ENCODE measurements at regions of chr4 and their contacts with region 1.

Region 1: DNA sequence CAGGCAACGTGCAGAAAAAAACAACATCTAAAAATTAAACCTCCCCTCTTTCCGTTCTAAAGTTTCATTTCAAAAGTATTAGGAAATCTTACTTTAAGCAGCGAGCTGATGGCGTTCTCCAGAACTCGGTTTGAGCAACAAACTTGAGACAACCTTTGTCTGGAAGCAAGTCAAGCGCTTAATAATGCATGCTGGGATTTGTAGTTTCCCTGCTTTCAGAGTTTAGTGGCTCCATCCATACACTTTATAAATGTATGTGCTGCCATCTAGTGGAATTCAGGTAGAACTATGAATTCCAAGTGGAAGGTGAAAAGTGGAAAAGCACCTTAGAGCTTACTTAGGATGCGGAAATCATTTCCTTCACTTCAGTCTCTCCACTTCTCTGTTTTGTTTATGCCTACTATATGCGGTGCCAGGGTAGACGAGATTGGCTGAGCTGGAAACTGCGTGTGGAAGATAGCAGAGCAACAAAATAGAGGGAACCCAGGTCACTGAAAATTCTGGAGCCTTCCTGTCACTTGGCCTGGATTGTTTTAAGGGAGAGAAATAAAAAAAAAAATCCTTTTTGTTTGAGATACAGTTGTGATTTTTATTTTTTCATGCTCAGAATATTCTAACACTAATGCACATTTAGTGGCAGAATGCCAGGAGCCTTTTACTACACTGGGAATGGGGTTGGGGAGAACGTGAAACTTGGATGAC is at the start of gene BDH2:
- DNase-seq: peak; percentile 54 to 66
- ATAC-seq: peak; percentile 100
- H3K4me3 ChIP-seq: peak within 1 kb of the TSS; percentile 55 to 62 (median 58)
- H3K27ac ChIP-seq: peak within 1 kb of the TSS; percentile 66 to 77 (median 73)
- H3K4me1 ChIP-seq: peaks cover 14 to 19% of the 10 kb centered on the region in 2 donors
- H3K27me3 ChIP-seq: no peaks in the 10 kb centered on the region
- CTCF ChIP-seq: peak; percentile 75 to 82 (median 79)
- POLR2A ChIP-seq: peak in 1 of 2 donors; percentile 28
- total RNA-seq, gene BDH2: 11.6 to 40.3 (median 18.5) TPM

Region 2: DNA sequence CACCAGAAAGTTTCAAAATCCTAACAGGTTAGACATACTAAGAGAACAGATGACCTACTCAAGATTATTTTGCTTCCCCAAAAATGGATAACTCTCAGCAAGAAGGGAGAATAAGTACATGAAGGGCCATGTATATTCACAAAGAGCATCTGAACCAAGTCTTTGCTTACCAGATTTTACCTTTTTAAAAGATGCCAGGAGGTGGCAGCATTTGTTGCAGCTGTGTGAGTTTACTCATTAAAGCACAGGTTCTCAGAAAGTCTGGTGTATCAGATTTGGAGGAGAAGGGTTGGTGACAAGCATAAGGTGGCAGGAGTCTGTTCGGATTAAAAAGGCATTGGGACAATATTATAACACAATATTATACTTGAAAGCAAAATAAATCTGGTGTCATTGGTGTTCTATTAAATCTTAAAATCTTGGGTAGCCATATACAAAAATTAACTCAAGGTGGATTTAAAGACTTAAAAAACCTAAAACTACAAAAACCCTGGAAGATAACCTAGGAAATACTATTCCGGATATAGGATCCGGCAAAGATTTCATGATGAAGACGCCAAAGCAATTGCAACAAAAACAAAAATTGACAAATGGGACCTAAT is 650.0 kb before region 1 on chr4:
- in situ Hi-C with region 1: loop called in 1 of 4 experiments (anchors 10 kb)
- intact Hi-C with region 1: loop called (anchors 5 kb)
- DNase-seq: no peak
- ATAC-seq: peak; percentile 68 to 75
- H3K4me3 ChIP-seq: no peak overlapping the region
- H3K27ac ChIP-seq: no peak overlapping the region
- H3K4me1 ChIP-seq: no peaks in the 10 kb centered on the region
- H3K27me3 ChIP-seq: no peaks in the 10 kb centered on the region
- CTCF ChIP-seq: peak; percentile 27 to 68 (median 42)
- POLR2A ChIP-seq: no peak

Region 3: GRCh38 chr4:102620697-102621497 is 478.9 kb before region 1 on chr4:
- in situ Hi-C with region 1: loop called (anchors 10 kb)
- intact Hi-C with region 1: loop called (anchors 1 kb)
- DNase-seq: peak in 1 of 2 donors; percentile 28
- ATAC-seq: peak; percentile 97 to 100
- H3K4me3 ChIP-seq: no peak overlapping the region
- H3K27ac ChIP-seq: peak overlapping the region in 3 of 4 donors; percentile 8 to 47 (median 16)
- H3K4me1 ChIP-seq: peaks cover 0 to 4% of the 10 kb centered on the region in 2 donors
- H3K27me3 ChIP-seq: no peaks in the 10 kb centered on the region
- CTCF ChIP-seq: peak; percentile 38 to 66 (median 55)
- POLR2A ChIP-seq: no peak

Region 4: DNA sequence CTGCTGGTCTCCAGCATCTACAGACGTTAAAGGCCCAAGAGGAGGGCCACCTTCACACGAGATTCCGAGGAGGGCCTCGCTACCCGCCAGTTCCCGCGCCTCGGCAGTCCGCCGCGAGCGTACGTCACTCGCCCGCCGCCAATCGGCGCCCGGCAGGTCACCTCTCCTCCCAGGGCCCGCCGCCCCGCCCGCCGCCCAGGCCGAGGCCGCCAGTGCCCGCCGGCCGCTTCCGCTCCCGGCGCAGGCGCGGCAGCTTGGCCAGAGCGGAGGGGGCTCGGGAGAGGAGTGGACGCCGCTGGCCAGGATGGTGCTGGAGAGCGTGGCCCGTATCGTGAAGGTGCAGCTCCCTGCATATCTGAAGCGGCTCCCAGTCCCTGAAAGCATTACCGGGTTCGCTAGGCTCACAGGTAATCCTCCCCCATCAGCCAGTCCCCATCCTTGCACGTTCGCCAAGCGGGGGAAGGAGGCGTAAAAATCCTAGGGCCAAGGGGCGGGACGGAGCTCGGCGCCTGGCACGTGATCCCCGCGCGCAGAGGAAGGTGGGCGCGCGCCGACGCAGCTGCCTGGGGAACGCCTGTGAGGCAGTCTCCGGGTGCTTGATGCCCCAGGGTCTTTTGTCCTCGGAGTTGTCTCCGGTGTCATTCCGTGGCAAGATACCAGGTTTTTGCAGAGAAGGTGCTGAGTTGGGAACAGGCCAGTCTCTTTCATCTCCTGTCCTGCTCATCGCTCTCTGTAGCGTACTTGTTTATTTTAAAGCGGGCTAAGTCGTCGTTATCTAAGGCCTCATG is 230.9 kb before region 1 on chr4 and contains the start of gene CISD2:
- in situ Hi-C with region 1: no loop called
- intact Hi-C with region 1: loop called (anchors 5 kb)
- DNase-seq: peak; percentile 84 to 85
- ATAC-seq: peak; percentile 93 to 95
- H3K4me3 ChIP-seq: peak within 1 kb of the TSS; percentile 75 to 86 (median 76)
- H3K27ac ChIP-seq: peak within 1 kb of the TSS; percentile 90 to 98 (median 92)
- H3K4me1 ChIP-seq: peaks cover 10 to 15% of the 10 kb centered on the region in 2 donors
- H3K27me3 ChIP-seq: no peaks in the 10 kb centered on the region
- CTCF ChIP-seq: peak in 1 of 5 experiments; percentile 7
- POLR2A ChIP-seq: peak; percentile 62 to 80
- total RNA-seq, gene CISD2: 3.8 to 8.9 (median 5.3) TPM

Region 5: GRCh38 chr4:103046416-103047290 is 53.2 kb before region 1 on chr4:
- in situ Hi-C with region 1: loop called in 2 of 4 experiments (anchors 10 kb)
- intact Hi-C with region 1: loop called (anchors 2 kb)
- DNase-seq: no peak
- ATAC-seq: peak; percentile 86 to 87
- H3K4me3 ChIP-seq: no peak overlapping the region
- H3K27ac ChIP-seq: no peak overlapping the region
- H3K4me1 ChIP-seq: no peaks in the 10 kb centered on the region
- H3K27me3 ChIP-seq: no peaks in the 10 kb centered on the region
- CTCF ChIP-seq: peak; percentile 23 to 65 (median 46)
- POLR2A ChIP-seq: no peak

Measured in gastrocnemius medialis (tissue), 4 donors.